Activated T-helper 2 cell treated with anti-CD3 and anti-CD28 coated beads, Interferon-gamma antibody, Interleukin-2, Interleukin-4, amounts not matched to agents 10 μg/mL and 5 μg/mL and 100 μg/mL, durations not matched to agents 14 hours and 24 hours and 36 hours (primary cell): ENCODE measurements at regions of chr14 and their contacts with region 1.

Region 1: GRCh38 chr14:103385152-103385993 is at the start of gene MARK3:
- DNase-seq: peak; percentile 96
- H3K4me3 Mint-ChIP-seq: peak within 1 kb of the TSS; percentile 99
- H3K27ac Mint-ChIP-seq: peak within 1 kb of the TSS; percentile 93
- H3K4me1 Mint-ChIP-seq: peaks cover 27% of the 10 kb centered on the region
- H3K27me3 Mint-ChIP-seq: peaks cover 5% of the 10 kb centered on the region
- total RNA-seq, gene MARK3: 81.4 and 84.1 TPM in 2 replicates

Region 2: DNA sequence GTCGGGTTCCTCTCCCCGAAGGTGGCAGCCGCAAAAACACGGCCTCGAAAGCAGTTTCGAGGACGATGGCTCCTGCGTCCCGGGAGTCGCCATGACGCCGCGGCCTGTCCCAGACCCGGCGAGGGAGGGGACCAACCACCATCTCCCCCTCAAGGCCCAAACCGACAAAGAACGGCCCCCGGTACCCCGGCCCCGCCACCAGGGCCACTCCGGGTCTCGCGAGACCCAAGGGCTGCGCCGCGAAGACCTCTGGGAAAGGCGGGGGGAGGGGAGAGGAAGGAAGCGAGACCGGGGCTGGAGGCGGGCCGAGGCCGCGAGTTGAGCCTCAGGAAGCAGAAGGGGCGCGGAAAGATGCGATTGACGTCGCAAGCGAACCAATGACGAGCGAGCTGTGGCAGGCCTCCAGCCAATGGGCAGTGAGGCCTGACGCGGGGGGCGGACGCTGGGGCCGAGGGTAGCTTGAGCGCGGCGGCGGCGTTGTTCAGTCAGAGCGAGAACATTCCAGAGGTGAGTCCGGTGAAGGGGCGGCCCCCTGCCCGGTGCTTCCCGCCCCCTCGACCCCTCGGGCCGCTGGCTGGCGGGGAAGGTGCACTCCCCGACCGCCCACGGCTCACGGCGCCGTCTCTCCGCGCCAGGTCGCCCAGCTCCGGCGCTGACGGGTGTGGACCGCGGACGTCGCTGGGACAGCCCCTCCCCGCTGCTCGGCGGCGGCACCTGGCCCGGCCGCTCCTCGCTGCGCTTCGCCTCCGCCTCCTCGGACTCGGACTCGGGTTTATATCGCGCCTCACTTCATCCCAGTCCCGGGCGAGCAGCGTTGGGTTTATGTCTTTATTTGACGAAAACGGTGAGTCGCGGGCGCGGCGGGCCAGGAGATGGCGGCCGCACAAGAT is 51.4 kb before region 1 on chr14 and contains the start of gene EIF5:
- intact Hi-C with region 1: loop called (anchors 1 kb)
- DNase-seq: peak; percentile 98
- H3K4me3 Mint-ChIP-seq: peak within 1 kb of the TSS; percentile 89
- H3K27ac Mint-ChIP-seq: peak within 1 kb of the TSS; percentile 97
- H3K4me1 Mint-ChIP-seq: peaks cover 30% of the 10 kb centered on the region
- H3K27me3 Mint-ChIP-seq: peaks cover 2% of the 10 kb centered on the region
- total RNA-seq, gene EIF5: 261 TPM in 2 replicates

Region 3: GRCh38 chr14:103427485-103428443 is 42.4 kb after region 1 on chr14:
- intact Hi-C with region 1: loop called (anchors 5 kb)
- DNase-seq: peak; percentile 26
- H3K4me3 Mint-ChIP-seq: no peak overlapping the region
- H3K27ac Mint-ChIP-seq: peak overlapping the region; percentile 67
- H3K4me1 Mint-ChIP-seq: peaks cover 24% of the 10 kb centered on the region
- H3K27me3 Mint-ChIP-seq: no peaks in the 10 kb centered on the region